IMR-90 (cell line): ENCODE measurements at regions of chr12 and their contacts with region 1.

Region 1: GRCh38 chr12:119544765-119545625 is 48.6 kb upstream of the TMEM233 start:
- DNase-seq: peak; percentile 70
- ATAC-seq: peak; percentile 97
- H3K4me3 ChIP-seq: no peak overlapping the region
- H3K27ac ChIP-seq: no peak overlapping the region
- H3K4me1 ChIP-seq: no peaks in the 10 kb centered on the region
- H3K27me3 ChIP-seq: no peaks in the 10 kb centered on the region
- CTCF ChIP-seq: peak; percentile 83
- POLR2A ChIP-seq: no peak
- RAD21 ChIP-seq: peak; percentile 86

Region 2: GRCh38 chr12:118164798-118165486 is 1380.1 kb before region 1 on chr12:
- CTCF ChIA-PET with region 1: no interaction called
- POLR2A ChIA-PET with region 1: no interaction called
- dilution Hi-C with region 1: no loop called
- in situ Hi-C with region 1: no loop called
- intact Hi-C with region 1: no loop called
- DNase-seq: peak; percentile 33
- ATAC-seq: peak; percentile 75
- H3K4me3 ChIP-seq: no peak overlapping the region
- H3K27ac ChIP-seq: no peak overlapping the region
- H3K4me1 ChIP-seq: no peaks in the 10 kb centered on the region
- H3K27me3 ChIP-seq: no peaks in the 10 kb centered on the region
- CTCF ChIP-seq: peak; percentile 48
- POLR2A ChIP-seq: no peak
- RAD21 ChIP-seq: peak; percentile 58

Region 3: GRCh38 chr12:118398940-118399339 is 1146.1 kb before region 1 on chr12:
- CTCF ChIA-PET with region 1: no interaction called
- POLR2A ChIA-PET with region 1: interaction called, 10 read pairs
- dilution Hi-C with region 1: no loop called
- in situ Hi-C with region 1: loop called (anchors 10 kb)
- intact Hi-C with region 1: no loop called
- DNase-seq: peak; percentile 17
- ATAC-seq: peak; percentile 35; the same call in 1 of the 2 replicates
- H3K4me3 ChIP-seq: no peak overlapping the region
- H3K27ac ChIP-seq: no peak overlapping the region
- H3K4me1 ChIP-seq: peaks cover 3% of the 10 kb centered on the region
- H3K27me3 ChIP-seq: no peaks in the 10 kb centered on the region
- CTCF ChIP-seq: no peak
- POLR2A ChIP-seq: no peak
- RAD21 ChIP-seq: no peak

Region 4: DNA sequence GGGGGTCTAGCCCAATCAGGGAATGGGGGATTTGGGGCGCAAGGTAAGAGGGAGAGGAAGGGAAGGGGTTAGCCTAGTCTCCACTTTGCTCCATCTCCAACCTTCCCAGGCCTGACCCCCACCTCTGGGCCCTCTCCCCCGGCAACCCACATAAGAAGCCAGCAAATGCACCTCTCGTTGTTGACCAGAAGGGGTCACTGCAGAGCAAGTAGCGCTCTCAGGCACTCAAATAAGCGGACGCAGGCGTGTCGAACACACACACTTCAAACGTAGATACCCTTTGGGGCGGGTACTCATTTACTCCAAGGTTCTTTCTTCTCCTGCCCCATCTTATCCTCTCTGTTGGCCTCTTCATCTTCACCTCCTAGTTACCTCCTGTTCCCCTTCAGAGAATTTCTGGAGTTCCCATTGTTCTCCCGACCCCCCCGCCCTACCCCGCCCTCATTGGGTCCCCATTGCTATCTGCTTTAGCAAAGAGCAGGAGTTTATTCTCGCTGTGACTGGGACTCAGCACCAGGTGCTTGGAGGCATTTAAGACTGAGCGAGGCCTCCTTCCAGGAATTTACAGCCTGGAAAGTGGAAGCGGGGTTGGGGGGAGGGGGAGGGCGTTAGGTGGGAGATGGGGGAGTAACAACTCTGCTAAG is 565.1 kb before region 1 on chr12:
- CTCF ChIA-PET with region 1: no interaction called
- POLR2A ChIA-PET with region 1: no interaction called
- dilution Hi-C with region 1: no loop called
- in situ Hi-C with region 1: no loop called
- intact Hi-C with region 1: loop called (anchors 10 kb)
- DNase-seq: peak; percentile 24
- ATAC-seq: 0 out of 2 replicates have a peak, but pooled peaks have one; percentile 32
- H3K4me3 ChIP-seq: no peak overlapping the region
- H3K27ac ChIP-seq: no peak overlapping the region
- H3K4me1 ChIP-seq: no peaks in the 10 kb centered on the region
- H3K27me3 ChIP-seq: no peaks in the 10 kb centered on the region
- CTCF ChIP-seq: peak; percentile 41
- POLR2A ChIP-seq: no peak
- RAD21 ChIP-seq: peak; percentile 40; the same call in 1 of the 2 replicates